ENCODE measurements at regions of chr16 and their contacts with region 1.

Region 1: DNA sequence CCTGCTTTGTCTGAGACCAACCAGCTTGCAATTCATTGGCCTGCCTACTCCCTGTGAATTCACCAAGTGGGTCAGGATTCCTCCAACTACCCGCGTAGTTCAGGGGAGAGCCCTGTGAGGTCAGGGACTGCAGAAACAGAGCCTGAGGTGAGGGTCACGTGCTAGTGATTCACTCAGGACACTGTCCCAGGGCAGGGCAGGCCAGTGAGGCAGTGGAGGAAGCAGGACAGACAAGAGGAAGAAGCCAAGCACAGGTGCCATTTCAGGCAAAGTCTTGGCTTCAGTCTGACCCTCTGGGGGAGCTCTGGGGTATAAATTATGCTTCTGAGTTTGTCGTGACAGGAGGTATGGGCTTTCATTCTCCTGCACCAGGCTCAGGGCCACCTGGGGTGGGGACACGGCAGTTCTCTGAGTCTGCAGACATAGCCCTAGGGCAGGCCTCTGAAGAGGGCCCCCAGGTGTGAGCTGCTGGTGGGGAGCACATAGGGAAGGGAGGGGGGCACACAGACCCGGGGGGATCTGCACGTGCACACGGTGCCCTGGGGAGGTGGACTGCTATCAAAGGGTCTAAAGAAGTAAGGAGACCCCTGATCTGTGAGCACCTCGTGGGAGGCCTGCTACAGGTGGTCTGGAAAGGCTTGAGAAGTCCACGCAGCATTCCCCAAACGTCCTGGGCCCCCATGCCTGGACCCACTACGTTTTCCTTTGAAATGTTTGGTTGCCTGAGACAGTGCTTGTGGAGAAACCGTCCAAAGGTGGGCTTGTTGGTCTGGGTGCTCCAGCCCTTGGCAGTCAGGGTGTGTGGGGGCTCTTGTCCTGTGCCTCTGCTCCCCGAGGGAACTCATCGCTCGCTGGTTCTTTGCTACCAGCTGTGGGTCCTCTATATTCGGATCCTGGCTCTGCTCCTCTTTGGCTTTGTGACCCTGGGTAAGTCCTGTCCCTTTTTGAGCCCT is 46.4 kb downstream of the NKD1 start:
- DNase-seq: no peak
- H3K4me3 ChIP-seq: no peak overlapping the region
- CTCF ChIP-seq: no peak
- POLR2A ChIP-seq: no peak

Region 2: DNA sequence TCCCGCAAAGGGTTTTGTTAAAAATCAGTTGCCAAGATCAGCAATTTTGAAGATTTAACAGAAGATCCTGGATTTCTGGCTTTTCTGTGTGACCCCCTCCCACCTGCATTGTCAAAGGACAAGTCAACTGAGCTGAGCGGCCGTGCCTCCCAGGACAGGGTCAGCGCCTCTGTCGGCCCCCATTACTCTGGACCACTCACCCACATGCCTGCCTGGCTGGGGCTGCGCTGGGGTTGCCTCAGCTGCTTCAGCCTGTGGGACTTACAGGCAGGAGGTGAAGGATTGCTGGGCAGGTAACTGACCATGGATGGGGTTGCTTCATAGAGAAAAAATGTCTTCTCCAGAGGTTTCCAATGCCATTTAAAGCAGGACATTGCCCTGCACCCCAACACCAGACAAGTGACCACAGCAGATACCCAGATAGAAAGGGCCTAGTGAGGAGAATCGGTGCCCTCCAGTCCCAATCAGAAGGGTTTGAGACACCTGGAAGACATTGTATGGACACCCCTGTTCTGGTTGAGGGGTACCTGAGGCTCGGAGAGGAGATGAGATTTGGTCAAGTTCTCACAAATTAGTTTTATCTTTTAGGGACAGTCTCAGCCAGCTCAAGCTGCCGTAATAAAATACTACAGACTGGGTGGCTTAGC is 33.7 kb after region 1 on chr16:
- intact Hi-C with region 1: loop called (anchors 1 kb)
- DNase-seq: no peak
- H3K4me3 ChIP-seq: no peak overlapping the region
- CTCF ChIP-seq: no peak
- POLR2A ChIP-seq: no peak